Mucosa of descending colon (tissue), 3 donors: ENCODE measurements at regions of chr10 and their contacts with region 1.

Region 1: DNA sequence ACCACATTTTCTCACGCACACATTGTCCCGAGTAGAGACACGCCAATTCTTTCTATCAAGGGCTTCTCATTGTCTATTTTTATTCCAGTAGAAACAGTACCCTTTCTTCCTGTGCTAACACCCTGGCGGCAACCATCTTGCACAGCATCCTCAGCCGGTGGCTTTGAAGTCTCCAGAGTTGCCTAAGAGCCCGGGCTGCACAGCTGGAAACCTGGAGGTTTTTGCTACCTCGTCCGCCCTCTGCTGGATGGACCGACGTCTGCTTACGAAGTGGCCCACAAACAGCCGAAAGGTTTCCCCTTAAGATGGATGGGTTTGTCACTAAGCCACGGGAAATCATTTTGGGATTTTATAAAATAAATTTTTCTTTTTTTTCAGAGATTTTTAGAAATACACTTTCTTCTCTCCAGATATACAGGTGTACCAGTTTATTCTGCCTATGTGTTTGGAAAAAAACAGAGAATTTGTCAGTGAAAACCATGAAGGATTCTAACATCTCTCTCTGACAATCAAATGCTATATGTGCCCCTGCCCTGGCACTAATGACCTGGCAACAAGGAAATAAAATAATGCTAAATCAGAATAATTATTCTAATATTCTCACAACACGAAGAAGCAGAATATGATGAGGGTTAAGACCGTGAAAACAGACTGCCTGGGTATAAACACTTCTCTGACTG is 81.8 kb upstream of the FAM204A start:
- DNase-seq: peak; percentile 72 to 88 (median 81)
- ATAC-seq: peak; percentile 91
- H3K4me3 ChIP-seq: no peak overlapping the region
- H3K4me1 ChIP-seq: no peaks in the 10 kb centered on the region
- CTCF ChIP-seq: peak; percentile 56

Region 2: GRCh38 chr10:118096022-118096421 is 327.9 kb before region 1 on chr10:
- intact Hi-C with region 1: no loop called
- DNase-seq: no peak
- ATAC-seq: no peak
- H3K4me3 ChIP-seq: no peak overlapping the region
- H3K4me1 ChIP-seq: no peaks in the 10 kb centered on the region
- CTCF ChIP-seq: no peak

Region 3: DNA sequence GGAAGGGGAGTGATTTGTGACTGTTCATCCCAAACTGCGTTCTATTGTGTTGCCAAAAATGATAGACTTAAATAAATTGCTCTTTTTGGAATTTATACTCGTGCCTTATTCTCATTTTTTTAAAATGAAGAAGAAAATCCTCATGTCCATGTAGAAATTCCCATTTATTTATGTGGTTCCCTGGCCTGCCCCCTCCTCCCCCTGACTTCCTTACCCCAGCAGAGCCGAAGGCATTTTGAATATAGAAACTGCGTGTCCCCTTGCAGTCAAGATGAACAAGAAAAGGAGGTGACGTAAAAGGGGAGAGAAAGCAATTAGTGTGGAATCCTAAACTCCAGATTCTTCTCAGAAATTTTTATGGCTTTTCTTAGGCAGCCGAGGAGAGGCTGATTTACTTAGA is 207.9 kb before region 1 on chr10:
- intact Hi-C with region 1: no loop called
- DNase-seq: no peak
- ATAC-seq: no peak
- H3K4me3 ChIP-seq: no peak overlapping the region
- H3K4me1 ChIP-seq: peaks cover 5% of the 10 kb centered on the region
- CTCF ChIP-seq: no peak

Region 4: GRCh38 chr10:118459726-118460193 is 35.8 kb after region 1 on chr10:
- intact Hi-C with region 1: loop called in 1 of 2 experiments (anchors 2 kb)
- DNase-seq: peak in 2 of 3 donors; percentile 60 to 82
- ATAC-seq: peak; percentile 85
- H3K4me3 ChIP-seq: no peak overlapping the region
- H3K4me1 ChIP-seq: peaks cover 6% of the 10 kb centered on the region
- CTCF ChIP-seq: peak; percentile 48

Region 5: GRCh38 chr10:118522791-118523498 is 99.0 kb after region 1 on chr10:
- intact Hi-C with region 1: no loop called
- DNase-seq: no peak
- ATAC-seq: no peak
- H3K4me3 ChIP-seq: no peak overlapping the region
- H3K4me1 ChIP-seq: no peaks in the 10 kb centered on the region
- CTCF ChIP-seq: no peak